CD4-positive, alpha-beta T cell (primary cell): ENCODE measurements at regions of chr2 and their contacts with region 1.

Region 1: GRCh38 chr2:135741395-135742324 is at the start of gene UBXN4:
- DNase-seq: peak; percentile 86 to 99 (median 93)
- ATAC-seq: peak; percentile 87
- H3K4me3 ChIP-seq: peak within 1 kb of the TSS; percentile 94
- H3K4me3 Mint-ChIP-seq: peak within 1 kb of the TSS; percentile 95
- H3K27ac ChIP-seq: peak within 1 kb of the TSS; percentile 95 to 98
- H3K27ac Mint-ChIP-seq: peak within 1 kb of the TSS; percentile 92
- H3K4me1 ChIP-seq: peaks cover 11% of the 10 kb centered on the region
- H3K4me1 Mint-ChIP-seq: peaks cover 46% of the 10 kb centered on the region
- H3K27me3 ChIP-seq: no peaks in the 10 kb centered on the region
- H3K27me3 Mint-ChIP-seq: no peaks in the 10 kb centered on the region
- CTCF ChIP-seq: peak; percentile 17
- total RNA-seq, gene UBXN4: 143 to 150 TPM

Region 2: GRCh38 chr2:134918526-134919340 is 822.9 kb before region 1 on chr2 and contains the start of gene CCNT2:
- CTCF ChIA-PET with region 1: interaction called, 3 read pairs
- POLR2A ChIA-PET with region 1: interaction called, 14 read pairs
- intact Hi-C with region 1: loop called (anchors 2 to 5 kb)
- DNase-seq: peak; percentile 98 to 100 (median 99)
- ATAC-seq: peak; percentile 82
- H3K4me3 ChIP-seq: peak within 1 kb of the TSS; percentile 88
- H3K4me3 Mint-ChIP-seq: peak within 1 kb of the TSS; percentile 92
- H3K27ac ChIP-seq: peak within 1 kb of the TSS; percentile 95 to 96
- H3K27ac Mint-ChIP-seq: peak within 1 kb of the TSS; percentile 92
- H3K4me1 ChIP-seq: peaks cover 25% of the 10 kb centered on the region
- H3K4me1 Mint-ChIP-seq: peaks cover 57% of the 10 kb centered on the region
- H3K27me3 ChIP-seq: no peaks in the 10 kb centered on the region
- H3K27me3 Mint-ChIP-seq: no peaks in the 10 kb centered on the region
- CTCF ChIP-seq: no peak
- total RNA-seq, gene CCNT2: 62.1 to 67.5 TPM

Region 3: DNA sequence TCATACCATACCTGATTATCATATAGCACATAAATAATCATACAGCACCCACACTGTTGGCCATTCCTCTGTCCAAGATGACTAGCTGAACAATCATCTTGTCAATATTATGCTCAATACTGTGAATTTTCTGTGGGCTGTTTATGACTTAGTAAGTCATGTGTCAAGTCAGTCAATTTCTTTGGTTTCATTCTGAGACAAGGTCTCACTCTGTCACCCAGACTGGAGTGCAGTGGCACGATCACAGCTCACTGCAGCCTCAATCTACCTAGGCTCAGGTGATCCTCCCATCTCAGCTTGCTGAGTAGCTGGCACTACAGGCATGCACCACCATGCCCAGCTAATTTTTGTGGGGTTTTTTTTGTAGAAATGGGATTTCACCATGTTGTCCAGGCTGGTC is 128.9 kb after region 1 on chr2:
- CTCF ChIA-PET with region 1: no interaction called
- POLR2A ChIA-PET with region 1: interaction called, 9 read pairs
- intact Hi-C with region 1: loop called (anchors 5 kb)
- DNase-seq: no peak
- ATAC-seq: no peak
- H3K4me3 ChIP-seq: no peak overlapping the region
- H3K4me3 Mint-ChIP-seq: no peak overlapping the region
- H3K27ac ChIP-seq: no peak overlapping the region
- H3K27ac Mint-ChIP-seq: no peak overlapping the region
- H3K4me1 ChIP-seq: peaks cover 9% of the 10 kb centered on the region
- H3K4me1 Mint-ChIP-seq: peaks cover 35% of the 10 kb centered on the region
- H3K27me3 ChIP-seq: no peaks in the 10 kb centered on the region
- H3K27me3 Mint-ChIP-seq: no peaks in the 10 kb centered on the region
- CTCF ChIP-seq: no peak

Region 4: GRCh38 chr2:135876066-135876711 is 134.5 kb after region 1 on chr2 and contains the start of gene MCM6:
- CTCF ChIA-PET with region 1: no interaction called
- POLR2A ChIA-PET with region 1: interaction called, 9 read pairs
- intact Hi-C with region 1: loop called (anchors 5 kb)
- DNase-seq: peak; percentile 94 to 100 (median 96)
- ATAC-seq: peak; percentile 89
- H3K4me3 ChIP-seq: peak within 1 kb of the TSS; percentile 94
- H3K4me3 Mint-ChIP-seq: peak within 1 kb of the TSS; percentile 97
- H3K27ac ChIP-seq: peak within 1 kb of the TSS; percentile 76 to 83
- H3K27ac Mint-ChIP-seq: peak within 1 kb of the TSS; percentile 99
- H3K4me1 ChIP-seq: peaks cover 19% of the 10 kb centered on the region
- H3K4me1 Mint-ChIP-seq: peaks cover 48% of the 10 kb centered on the region
- H3K27me3 ChIP-seq: no peaks in the 10 kb centered on the region
- H3K27me3 Mint-ChIP-seq: no peaks in the 10 kb centered on the region
- CTCF ChIP-seq: no peak
- total RNA-seq, gene MCM6: 31.5 to 34.4 TPM

Region 5: DNA sequence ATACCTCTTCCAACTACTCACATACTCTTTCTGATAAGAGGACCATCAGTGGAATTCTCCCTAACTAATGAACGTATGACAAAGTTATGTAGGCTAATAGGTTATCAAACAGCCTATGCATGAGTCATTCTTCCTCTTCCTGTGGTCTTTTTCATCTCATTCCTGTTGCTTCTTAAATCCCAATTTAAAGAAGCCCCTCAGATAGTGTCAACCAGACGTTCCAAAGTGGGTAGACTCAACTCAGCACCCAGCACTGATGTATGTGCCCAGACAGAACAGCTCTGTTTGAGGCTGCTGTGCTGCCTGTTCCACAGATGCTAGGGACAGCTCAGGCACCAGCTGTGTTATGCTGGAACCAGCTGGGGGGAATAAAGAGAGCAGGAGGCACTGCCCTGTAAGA is 323.7 kb after region 1 on chr2:
- CTCF ChIA-PET with region 1: no interaction called
- POLR2A ChIA-PET with region 1: no interaction called
- intact Hi-C with region 1: no loop called
- DNase-seq: peak in 2 of 14 experiments; percentile 27 to 50
- ATAC-seq: no peak
- H3K4me3 ChIP-seq: no peak overlapping the region
- H3K4me3 Mint-ChIP-seq: no peak overlapping the region
- H3K27ac ChIP-seq: no peak overlapping the region
- H3K27ac Mint-ChIP-seq: no peak overlapping the region
- H3K4me1 ChIP-seq: peaks cover 25% of the 10 kb centered on the region
- H3K4me1 Mint-ChIP-seq: peaks cover 58% of the 10 kb centered on the region
- H3K27me3 ChIP-seq: no peaks in the 10 kb centered on the region
- H3K27me3 Mint-ChIP-seq: no peaks in the 10 kb centered on the region
- CTCF ChIP-seq: no peak